Aorta (tissue), 5 donors: ENCODE measurements at regions of chr7 and their contacts with region 1.

Region 1: GRCh38 chr7:39623018-39623731 is at the start of gene RALA:
- DNase-seq: peak; percentile 96 to 98
- ATAC-seq: peak; percentile 98
- H3K4me3 ChIP-seq: peak within 1 kb of the TSS; percentile 72 to 93
- H3K27ac ChIP-seq: peak within 1 kb of the TSS; percentile 34 to 61
- H3K4me1 ChIP-seq: peaks cover 0 to 1% of the 10 kb centered on the region in 2 donors
- H3K27me3 ChIP-seq: no peaks in the 10 kb centered on the region
- total RNA-seq, gene RALA: 16.4 to 22.1 TPM

Region 2: GRCh38 chr7:39580149-39580874 is 42.9 kb before region 1 on chr7:
- intact Hi-C with region 1: loop called in 1 of 2 experiments (anchors 5 kb)
- DNase-seq: peak; percentile 81 to 84
- ATAC-seq: peak; percentile 92
- H3K4me3 ChIP-seq: no peak overlapping the region
- H3K27ac ChIP-seq: no peak overlapping the region
- H3K4me1 ChIP-seq: no peaks in the 10 kb centered on the region
- H3K27me3 ChIP-seq: no peaks in the 10 kb centered on the region

Region 3: DNA sequence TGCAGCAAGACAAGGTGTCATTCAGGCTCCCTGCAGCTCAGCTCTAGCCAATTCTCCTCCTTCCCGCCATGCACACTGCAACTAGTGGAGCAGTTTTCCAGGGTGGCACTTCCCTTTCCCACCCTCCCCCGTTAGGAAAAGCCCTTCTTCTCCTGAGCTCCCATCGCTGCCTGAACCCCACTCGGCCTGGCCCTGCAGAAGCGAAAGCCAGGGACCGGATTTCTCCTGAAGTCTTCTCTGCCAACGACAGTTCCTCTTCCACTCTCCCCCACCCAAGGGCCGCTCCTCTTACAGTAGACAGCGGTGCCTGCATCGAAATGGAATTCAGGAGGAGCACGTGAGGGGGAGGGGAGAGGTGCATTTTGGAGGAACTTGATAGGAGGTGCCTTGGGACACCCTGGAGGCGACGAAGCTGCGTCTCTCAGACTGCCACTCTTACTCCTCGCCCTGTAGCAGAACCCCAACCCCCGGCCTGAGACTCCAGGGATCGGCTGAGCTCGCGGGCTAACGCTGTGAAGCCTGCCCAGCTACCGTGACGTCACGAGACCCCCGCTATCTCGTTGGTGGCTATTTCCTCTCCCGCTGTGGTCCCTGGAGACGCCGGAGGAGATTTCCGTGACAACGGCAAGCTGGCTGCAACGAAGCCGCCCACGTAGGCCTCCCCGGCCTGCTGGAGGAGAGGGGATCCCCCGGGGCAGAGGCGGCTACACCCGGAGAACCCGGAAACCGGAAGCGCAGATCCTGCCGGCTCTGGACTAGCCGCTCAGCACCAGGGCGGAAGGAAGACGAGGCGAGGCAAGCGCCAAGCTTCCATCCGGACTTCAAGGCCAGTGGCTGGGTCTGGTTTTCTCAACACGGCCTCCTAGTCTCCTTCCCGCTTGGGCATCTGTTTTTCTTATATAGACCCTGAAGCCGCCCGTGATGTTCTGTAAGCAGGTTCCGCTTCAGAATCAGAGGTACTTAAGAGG is 109.9 kb after region 1 on chr7:
- intact Hi-C with region 1: loop called in 1 of 2 experiments (anchors 5 kb)
- DNase-seq: peak; percentile 98
- ATAC-seq: peak; percentile 94
- H3K4me3 ChIP-seq: peak overlapping the region; percentile 55 to 77
- H3K27ac ChIP-seq: peak overlapping the region in 1 of 2 donors; percentile 10
- H3K4me1 ChIP-seq: no peaks in the 10 kb centered on the region
- H3K27me3 ChIP-seq: no peaks in the 10 kb centered on the region

Region 4: GRCh38 chr7:40092182-40092581 is 469.0 kb after region 1 on chr7:
- intact Hi-C with region 1: no loop called
- DNase-seq: no peak
- ATAC-seq: no peak
- H3K4me3 ChIP-seq: no peak overlapping the region
- H3K27ac ChIP-seq: no peak overlapping the region
- H3K4me1 ChIP-seq: no peaks in the 10 kb centered on the region
- H3K27me3 ChIP-seq: no peaks in the 10 kb centered on the region